PC-9 (cell line): ENCODE measurements at regions of chr12 and their contacts with region 1.

Region 1: GRCh38 chr12:46492471-46493351 is 120.1 kb upstream of the SLC38A2 start:
- DNase-seq: peak; percentile 25 to 88
- H3K4me3 ChIP-seq: peak overlapping the region; percentile 3; the same call in 1 of the 2 replicates
- H3K27ac ChIP-seq: peak overlapping the region; percentile 81
- H3K4me1 ChIP-seq: peaks cover 47% of the 10 kb centered on the region
- H3K27me3 ChIP-seq: no peaks in the 10 kb centered on the region
- CTCF ChIP-seq: no peak

Region 2: GRCh38 chr12:46430340-46430948 is 62.3 kb before region 1 on chr12:
- CTCF ChIA-PET with region 1: no interaction called
- POLR2A ChIA-PET with region 1: no interaction called
- intact Hi-C with region 1: loop called (anchors 2 kb)
- DNase-seq: peak; percentile 28 to 98
- H3K4me3 ChIP-seq: peak overlapping the region; percentile 34; the same call in 1 of the 2 replicates
- H3K27ac ChIP-seq: peak overlapping the region; percentile 95
- H3K4me1 ChIP-seq: peaks cover 41% of the 10 kb centered on the region
- H3K27me3 ChIP-seq: no peaks in the 10 kb centered on the region
- CTCF ChIP-seq: no peak